CD8-positive, alpha-beta memory T cell (primary cell): ENCODE measurements at regions of chr1 and their contacts with region 1.

Region 1: DNA sequence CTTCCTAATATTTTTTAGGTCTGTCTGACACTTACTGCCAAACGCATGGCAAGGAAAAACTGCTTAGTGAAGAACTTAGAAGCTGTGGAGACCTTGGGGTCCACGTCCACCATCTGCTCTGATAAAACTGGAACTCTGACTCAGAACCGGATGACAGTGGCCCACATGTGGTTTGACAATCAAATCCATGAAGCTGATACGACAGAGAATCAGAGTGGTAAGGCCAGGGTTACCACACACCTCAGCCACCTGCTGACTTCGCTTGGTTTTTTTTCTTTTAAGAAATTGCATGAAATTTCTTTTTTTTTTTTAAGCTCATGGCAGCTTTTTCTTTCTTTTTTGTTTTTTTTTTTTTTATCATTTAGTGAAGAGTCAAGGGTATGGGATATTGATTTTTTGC is 17.2 kb downstream of the ATP1A1 start:
- DNase-seq: peak in 4 of 5 donors; percentile 41 to 79 (median 62)
- H3K4me3 ChIP-seq: no peak overlapping the region
- H3K4me3 Mint-ChIP-seq: peak overlapping the region in 6 of 7 donors; percentile 27 to 54 (median 47)
- H3K27ac ChIP-seq: no peak overlapping the region
- H3K27ac Mint-ChIP-seq: peak overlapping the region; percentile 74 to 98 (median 92)
- H3K4me1 ChIP-seq: peaks cover 44% of the 10 kb centered on the region
- H3K4me1 Mint-ChIP-seq: peaks cover 38 to 56% (median 54%) of the 10 kb centered on the region in 3 donors
- H3K27me3 ChIP-seq: no peaks in the 10 kb centered on the region
- H3K27me3 Mint-ChIP-seq: no peaks in the 10 kb centered on the region

Region 2: GRCh38 chr1:116372587-116373444 is 17.4 kb before region 1 on chr1 and contains the start of gene ATP1A1:
- CTCF ChIA-PET with region 1: interaction called, 17 read pairs
- POLR2A ChIA-PET with region 1: interaction called, 16 read pairs
- DNase-seq: peak; percentile 96 to 98 (median 97)
- H3K4me3 ChIP-seq: peak within 1 kb of the TSS; percentile 70
- H3K4me3 Mint-ChIP-seq: peak within 1 kb of the TSS; percentile 89 to 98 (median 97)
- H3K27ac ChIP-seq: peak within 1 kb of the TSS; percentile 79
- H3K27ac Mint-ChIP-seq: peak within 1 kb of the TSS; percentile 96 to 99 (median 97)
- H3K4me1 ChIP-seq: peaks cover 46% of the 10 kb centered on the region
- H3K4me1 Mint-ChIP-seq: peaks cover 43 to 54% (median 50%) of the 10 kb centered on the region in 3 donors
- H3K27me3 ChIP-seq: no peaks in the 10 kb centered on the region
- H3K27me3 Mint-ChIP-seq: peaks cover 0 to 2% of the 10 kb centered on the region in 2 donors
- total RNA-seq, gene ATP1A1: 259 to 263 TPM

Region 3: GRCh38 chr1:116377541-116378529 is 12.4 kb before region 1 on chr1:
- CTCF ChIA-PET with region 1: interaction called, 17 read pairs
- POLR2A ChIA-PET with region 1: interaction called, 16 read pairs
- DNase-seq: peak; percentile 9 to 62 (median 54)
- H3K4me3 ChIP-seq: peak overlapping the region; percentile 34
- H3K4me3 Mint-ChIP-seq: peak overlapping the region; percentile 83 to 97 (median 91)
- H3K27ac ChIP-seq: peak overlapping the region; percentile 79
- H3K27ac Mint-ChIP-seq: peak overlapping the region; percentile 86 to 99 (median 96)
- H3K4me1 ChIP-seq: peaks cover 78% of the 10 kb centered on the region
- H3K4me1 Mint-ChIP-seq: peaks cover 81 to 88% (median 84%) of the 10 kb centered on the region in 3 donors
- H3K27me3 ChIP-seq: no peaks in the 10 kb centered on the region
- H3K27me3 Mint-ChIP-seq: peaks cover 0 to 2% of the 10 kb centered on the region in 2 donors

Region 4: GRCh38 chr1:116436611-116436970 is 46.4 kb after region 1 on chr1:
- CTCF ChIA-PET with region 1: no interaction called
- POLR2A ChIA-PET with region 1: no interaction called
- DNase-seq: no peak
- H3K4me3 ChIP-seq: no peak overlapping the region
- H3K4me3 Mint-ChIP-seq: no peak overlapping the region
- H3K27ac ChIP-seq: no peak overlapping the region
- H3K27ac Mint-ChIP-seq: no peak overlapping the region
- H3K4me1 ChIP-seq: no peaks in the 10 kb centered on the region
- H3K4me1 Mint-ChIP-seq: no peaks in the 10 kb centered on the region
- H3K27me3 ChIP-seq: peaks cover 5% of the 10 kb centered on the region
- H3K27me3 Mint-ChIP-seq: peaks cover 1 to 21% of the 10 kb centered on the region in 2 donors

Region 5: DNA sequence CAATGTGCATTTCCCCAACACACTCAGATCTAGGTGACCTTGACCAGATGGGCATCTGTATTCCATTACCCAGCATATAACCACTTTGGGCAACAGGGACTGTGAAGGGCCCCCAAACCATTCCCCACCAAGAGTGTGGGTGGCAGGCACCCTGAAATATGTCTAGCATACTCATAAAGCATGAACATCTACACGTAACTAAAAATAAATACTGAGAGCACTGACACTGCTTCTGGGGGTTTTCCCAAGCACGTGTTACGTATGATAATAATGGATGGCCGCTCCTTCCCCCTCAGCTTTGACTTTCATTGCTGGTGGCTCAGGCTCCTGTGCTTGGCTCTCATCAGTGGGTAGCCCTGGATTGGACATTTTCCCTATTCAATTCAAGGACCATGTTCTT is 238.3 kb after region 1 on chr1:
- CTCF ChIA-PET with region 1: no interaction called
- POLR2A ChIA-PET with region 1: no interaction called
- DNase-seq: no peak
- H3K4me3 ChIP-seq: no peak overlapping the region
- H3K4me3 Mint-ChIP-seq: no peak overlapping the region
- H3K27ac ChIP-seq: no peak overlapping the region
- H3K27ac Mint-ChIP-seq: no peak overlapping the region
- H3K4me1 ChIP-seq: no peaks in the 10 kb centered on the region
- H3K4me1 Mint-ChIP-seq: no peaks in the 10 kb centered on the region
- H3K27me3 ChIP-seq: no peaks in the 10 kb centered on the region
- H3K27me3 Mint-ChIP-seq: peaks cover 5 to 8% of the 10 kb centered on the region in 2 donors

Region 6: GRCh38 chr1:116881879-116882520 is 491.8 kb after region 1 on chr1:
- CTCF ChIA-PET with region 1: no interaction called
- POLR2A ChIA-PET with region 1: no interaction called
- DNase-seq: no peak
- H3K4me3 ChIP-seq: no peak overlapping the region
- H3K4me3 Mint-ChIP-seq: no peak overlapping the region
- H3K27ac ChIP-seq: peak overlapping the region; percentile 38
- H3K27ac Mint-ChIP-seq: no peak overlapping the region
- H3K4me1 ChIP-seq: peaks cover 25% of the 10 kb centered on the region
- H3K4me1 Mint-ChIP-seq: no peaks in the 10 kb centered on the region
- H3K27me3 ChIP-seq: no peaks in the 10 kb centered on the region
- H3K27me3 Mint-ChIP-seq: peaks cover 0 to 2% of the 10 kb centered on the region in 2 donors